Transverse colon (tissue), 4 donors: ENCODE measurements at regions of chr6 and their contacts with region 1.

Region 1: DNA sequence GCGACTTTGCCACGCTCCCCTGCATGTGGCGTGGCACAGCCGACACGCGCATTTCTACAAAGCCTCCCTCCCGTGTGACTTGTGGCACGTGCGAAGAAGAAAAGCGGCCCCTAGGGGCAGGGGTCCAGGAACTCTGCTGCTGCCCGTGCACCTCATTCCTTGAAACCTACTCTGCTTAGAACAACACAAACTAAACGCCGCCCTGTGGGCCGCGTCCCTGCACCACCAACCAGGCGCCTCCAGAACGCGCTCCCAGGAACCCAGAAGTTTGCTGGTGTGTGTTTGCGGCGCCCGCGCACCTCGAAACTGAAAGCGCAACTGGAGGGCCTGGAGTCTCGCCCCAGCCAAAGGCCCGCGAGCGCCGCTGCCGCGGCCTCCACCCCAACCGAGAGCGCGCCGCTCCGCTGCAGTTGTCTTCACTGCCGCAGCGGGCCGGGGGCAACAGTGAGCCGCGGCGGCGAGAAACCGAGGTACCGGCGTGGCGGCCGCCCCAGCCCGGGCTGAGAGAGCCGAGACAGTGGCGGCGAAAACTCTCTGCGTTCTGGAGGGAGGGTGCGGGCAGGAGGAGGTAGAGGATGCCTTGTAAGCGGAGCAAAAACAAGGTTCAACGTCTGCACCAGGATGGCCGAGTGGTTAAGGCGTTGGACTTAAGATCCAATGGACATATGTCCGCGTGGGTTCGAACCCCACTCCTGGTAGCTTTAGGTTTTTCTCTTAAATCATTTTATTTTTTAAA is 65.8 kb downstream of the STX11 start:
- DNase-seq: peak; percentile 93
- H3K4me3 ChIP-seq: peak overlapping the region; percentile 47 to 69 (median 62)
- H3K27ac ChIP-seq: peak overlapping the region; percentile 94 to 98 (median 96)
- H3K4me1 ChIP-seq: peaks cover 6 to 21% (median 13%) of the 10 kb centered on the region in 4 donors
- H3K27me3 ChIP-seq: no peaks in the 10 kb centered on the region
- CTCF ChIP-seq: peak; percentile 42 to 84 (median 58)
- EP300 ChIP-seq: no peak
- POLR2A ChIP-seq: peak; percentile 38

Region 2: GRCh38 chr6:142485256-142485655 is 1730.8 kb before region 1 on chr6:
- in situ Hi-C with region 1: no loop called
- intact Hi-C with region 1: no loop called
- DNase-seq: no peak
- H3K4me3 ChIP-seq: no peak overlapping the region
- H3K27ac ChIP-seq: no peak overlapping the region
- H3K4me1 ChIP-seq: no peaks in the 10 kb centered on the region
- H3K27me3 ChIP-seq: no peaks in the 10 kb centered on the region
- CTCF ChIP-seq: no peak
- EP300 ChIP-seq: no peak
- POLR2A ChIP-seq: no peak

Region 3: DNA sequence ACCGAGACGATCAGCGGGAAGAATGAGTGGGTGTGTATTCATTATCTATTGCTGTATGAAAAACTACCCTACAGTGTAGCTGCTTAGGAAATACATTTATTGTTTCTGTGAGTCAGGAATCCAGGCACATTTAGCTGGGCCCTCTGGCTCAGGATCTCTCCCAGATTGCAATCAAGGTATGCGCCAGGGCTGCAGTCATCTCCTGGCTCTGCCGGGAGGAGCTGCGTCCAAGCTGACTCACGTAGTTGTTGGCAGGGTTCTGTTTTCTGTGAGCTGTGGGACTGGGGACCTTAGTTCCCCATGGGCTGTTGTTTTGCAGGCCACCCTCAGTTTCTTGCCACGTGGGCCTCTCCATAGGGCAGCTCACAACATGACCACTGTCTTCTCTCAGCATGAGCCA is 636.4 kb before region 1 on chr6:
- in situ Hi-C with region 1: no loop called
- intact Hi-C with region 1: no loop called
- DNase-seq: no peak
- H3K4me3 ChIP-seq: no peak overlapping the region
- H3K27ac ChIP-seq: no peak overlapping the region
- H3K4me1 ChIP-seq: peaks cover 0 to 10% (median 0%) of the 10 kb centered on the region in 4 donors
- H3K27me3 ChIP-seq: no peaks in the 10 kb centered on the region
- CTCF ChIP-seq: no peak
- EP300 ChIP-seq: no peak
- POLR2A ChIP-seq: no peak

Region 4: DNA sequence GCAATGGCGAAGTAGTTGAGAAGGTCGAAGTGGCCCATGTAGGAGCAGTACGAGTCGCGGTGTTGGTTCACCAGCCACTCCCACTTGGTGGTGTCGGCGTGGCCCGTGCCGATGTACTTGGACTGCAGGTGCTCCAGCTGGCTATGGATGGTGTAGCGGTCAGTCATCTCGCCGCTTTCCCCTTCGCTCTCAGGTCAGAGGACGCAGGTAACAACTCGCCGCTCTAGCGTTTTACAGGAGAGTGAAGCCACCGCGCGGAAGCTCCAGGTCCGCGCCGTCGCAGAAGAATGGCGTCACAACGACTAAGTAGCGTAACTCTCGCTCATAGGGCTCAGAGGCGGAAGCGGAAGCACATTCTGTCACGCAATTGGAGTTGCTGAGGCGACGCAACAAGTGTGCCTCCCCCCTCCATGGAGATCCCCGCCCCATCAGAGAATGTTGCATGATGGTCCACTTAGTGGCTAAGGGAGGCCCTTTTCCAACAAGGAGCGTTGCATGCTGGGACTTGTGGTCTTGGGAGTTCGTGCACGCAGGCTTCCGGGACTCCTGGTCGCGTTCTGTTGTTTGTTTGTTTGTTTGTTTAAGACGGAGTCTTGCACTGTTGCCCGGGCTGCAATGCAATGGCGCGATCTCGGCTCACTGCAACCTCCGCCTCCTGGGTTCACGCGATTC is 120.6 kb before region 1 on chr6 and contains the start of gene SF3B5:
- in situ Hi-C with region 1: loop called (anchors 5 to 10 kb)
- intact Hi-C with region 1: loop called (anchors 5 kb)
- DNase-seq: peak; percentile 99
- H3K4me3 ChIP-seq: peak within 1 kb of the TSS; percentile 55 to 79 (median 66)
- H3K27ac ChIP-seq: peak within 1 kb of the TSS; percentile 88 to 93 (median 88)
- H3K4me1 ChIP-seq: peaks cover 11 to 23% (median 16%) of the 10 kb centered on the region in 4 donors
- H3K27me3 ChIP-seq: no peaks in the 10 kb centered on the region
- CTCF ChIP-seq: no peak
- EP300 ChIP-seq: no peak
- POLR2A ChIP-seq: peak; percentile 93
- total RNA-seq, gene SF3B5: 60.2 to 187 (median 101) TPM

Region 5: GRCh38 chr6:144104898-144105487 is 111.1 kb before region 1 on chr6:
- in situ Hi-C with region 1: loop called (anchors 5 to 10 kb)
- intact Hi-C with region 1: no loop called
- DNase-seq: no peak
- H3K4me3 ChIP-seq: no peak overlapping the region
- H3K27ac ChIP-seq: no peak overlapping the region
- H3K4me1 ChIP-seq: no peaks in the 10 kb centered on the region
- H3K27me3 ChIP-seq: no peaks in the 10 kb centered on the region
- CTCF ChIP-seq: peak; percentile 56 to 72 (median 63)
- EP300 ChIP-seq: no peak
- POLR2A ChIP-seq: no peak

Region 6: GRCh38 chr6:144149891-144150709 is 66.0 kb before region 1 on chr6 and contains the start of gene STX11:
- in situ Hi-C with region 1: no loop called
- intact Hi-C with region 1: loop called (anchors 5 kb)
- DNase-seq: peak; percentile 76
- H3K4me3 ChIP-seq: peak within 1 kb of the TSS; percentile 37 to 71 (median 66)
- H3K27ac ChIP-seq: peak within 1 kb of the TSS; percentile 61 to 72 (median 70)
- H3K4me1 ChIP-seq: peaks cover 0 to 20% (median 13%) of the 10 kb centered on the region in 4 donors
- H3K27me3 ChIP-seq: peaks cover 25% of the 10 kb centered on the region
- CTCF ChIP-seq: no peak
- EP300 ChIP-seq: no peak
- POLR2A ChIP-seq: no peak
- total RNA-seq, gene STX11: 1.8 to 3.0 (median 2.3) TPM in 3 of 4 donors, not detected in the other

Region 7: GRCh38 chr6:144284783-144285547 is 68.9 kb after region 1 on chr6 and contains the start of gene UTRN:
- in situ Hi-C with region 1: loop called in 1 of 4 experiments (anchors 10 kb)
- intact Hi-C with region 1: loop called (anchors 10 kb)
- DNase-seq: peak; percentile 80
- H3K4me3 ChIP-seq: peak within 1 kb of the TSS; percentile 83 to 99 (median 90)
- H3K27ac ChIP-seq: peak within 1 kb of the TSS; percentile 92 to 98 (median 98)
- H3K4me1 ChIP-seq: peaks cover 4 to 22% (median 6%) of the 10 kb centered on the region in 4 donors
- H3K27me3 ChIP-seq: no peaks in the 10 kb centered on the region
- CTCF ChIP-seq: no peak
- EP300 ChIP-seq: no peak
- POLR2A ChIP-seq: peak; percentile 72
- total RNA-seq, gene UTRN: 42.3 to 134 (median 94.1) TPM

Region 8: GRCh38 chr6:144897441-144897921 is 681.4 kb after region 1 on chr6:
- in situ Hi-C with region 1: no loop called
- intact Hi-C with region 1: no loop called
- DNase-seq: no peak
- H3K4me3 ChIP-seq: no peak overlapping the region
- H3K27ac ChIP-seq: no peak overlapping the region
- H3K4me1 ChIP-seq: peaks cover 0 to 4% (median 0%) of the 10 kb centered on the region in 4 donors
- H3K27me3 ChIP-seq: no peaks in the 10 kb centered on the region
- CTCF ChIP-seq: no peak
- EP300 ChIP-seq: no peak
- POLR2A ChIP-seq: no peak